OCI-LY7 (cell line): ENCODE measurements at regions of chr15 and their contacts with region 1.

Region 1: DNA sequence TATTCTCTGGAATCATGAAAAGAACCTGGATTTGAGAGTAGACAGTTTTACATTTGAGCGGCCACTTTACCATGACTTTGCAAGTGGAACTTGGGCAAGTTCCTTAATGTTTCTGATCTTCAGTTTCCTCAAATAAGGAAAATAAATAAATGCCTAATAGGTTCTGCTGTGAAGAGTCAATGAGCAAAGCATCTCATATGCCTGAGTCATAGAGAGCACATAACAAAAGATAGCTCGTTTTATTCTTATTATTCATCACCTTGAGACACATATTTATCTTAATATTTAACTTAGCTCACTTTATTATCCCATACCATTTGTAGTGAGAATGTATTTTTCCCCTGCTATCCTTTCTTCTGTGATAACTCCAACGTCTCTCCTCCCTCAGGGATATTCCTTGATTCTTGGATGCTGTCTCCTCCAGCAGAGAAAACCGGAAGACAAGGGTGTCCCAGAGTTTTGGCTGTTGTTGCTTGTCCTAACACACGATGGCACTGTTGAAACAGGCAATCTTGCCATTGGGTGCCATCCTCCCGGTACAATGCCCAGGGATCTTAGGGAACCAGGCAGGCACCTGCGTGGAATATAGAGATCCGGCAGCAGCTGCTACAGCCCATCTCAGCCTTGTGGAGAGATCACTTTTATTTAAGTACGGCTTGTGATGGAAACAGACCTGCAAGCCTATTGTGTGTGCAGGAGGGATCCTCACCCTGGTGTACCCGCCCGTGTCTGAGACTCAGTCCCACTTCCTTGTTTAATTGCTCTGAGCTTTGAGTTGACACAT is 33.3 kb upstream of the VPS33B start:
- DNase-seq: peak; percentile 59
- H3K4me3 ChIP-seq: no peak overlapping the region
- H3K27ac ChIP-seq: no peak overlapping the region
- H3K4me1 ChIP-seq: no peaks in the 10 kb centered on the region
- CTCF ChIP-seq: peak; percentile 92

Region 2: GRCh38 chr15:91224755-91225380 is 169.1 kb after region 1 on chr15:
- CTCF ChIA-PET with region 1: no interaction called
- POLR2A ChIA-PET with region 1: interaction called, 3 read pairs
- intact Hi-C with region 1: loop called (anchors 5 kb)
- DNase-seq: peak; percentile 9
- H3K4me3 ChIP-seq: no peak overlapping the region
- H3K27ac ChIP-seq: no peak overlapping the region
- H3K4me1 ChIP-seq: no peaks in the 10 kb centered on the region
- CTCF ChIP-seq: peak; percentile 77

Region 3: DNA sequence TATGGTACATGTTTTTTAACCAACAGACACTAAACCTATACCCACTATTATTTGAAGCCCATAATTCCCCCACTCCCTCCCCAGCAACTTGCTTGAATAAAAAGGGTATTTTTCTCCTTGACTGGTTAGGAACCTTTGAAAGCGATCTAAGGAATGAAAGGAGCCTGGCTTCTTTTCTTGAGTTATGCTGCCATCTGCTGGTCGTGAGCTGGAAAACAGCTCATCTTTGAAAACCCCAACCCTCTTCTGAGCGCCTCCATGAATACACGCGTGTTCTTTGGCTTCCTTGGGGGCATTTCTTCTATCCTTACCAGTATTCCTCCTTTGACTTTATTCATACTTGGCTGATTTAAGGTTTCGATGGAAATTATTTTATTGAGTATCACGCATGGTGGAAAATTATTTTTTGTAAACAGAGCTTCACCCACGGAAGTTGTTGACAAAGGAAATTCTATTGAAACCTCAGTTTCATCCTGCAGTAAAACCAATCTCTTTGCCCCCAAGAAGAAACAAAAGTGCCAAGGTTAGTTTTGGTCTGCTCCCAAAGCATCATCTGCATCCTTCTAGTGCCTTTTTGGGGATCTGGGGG is 215.9 kb after region 1 on chr15:
- CTCF ChIA-PET with region 1: interaction called, 5 read pairs
- POLR2A ChIA-PET with region 1: interaction called, 5 read pairs
- intact Hi-C with region 1: loop called (anchors 1 kb)
- DNase-seq: peak; percentile 73
- H3K4me3 ChIP-seq: no peak overlapping the region
- H3K27ac ChIP-seq: no peak overlapping the region
- H3K4me1 ChIP-seq: no peaks in the 10 kb centered on the region
- CTCF ChIP-seq: peak; percentile 96